ENCODE measurements at regions of chr5 and their contacts with region 1.

Region 1: GRCh38 chr5:115098041-115098702 is 71.5 kb downstream of the TRIM36 start:
- DNase-seq: no peak
- H3K4me3 ChIP-seq: no peak overlapping the region
- H3K27ac ChIP-seq: no peak overlapping the region
- H3K4me1 ChIP-seq: peaks cover 0 to 15% (median 0%) of the 10 kb centered on the region in 3 donors
- H3K27me3 ChIP-seq: no peaks in the 10 kb centered on the region
- CTCF ChIP-seq: peak; percentile 37 to 65 (median 52)
- POLR2A ChIP-seq: no peak

Region 2: DNA sequence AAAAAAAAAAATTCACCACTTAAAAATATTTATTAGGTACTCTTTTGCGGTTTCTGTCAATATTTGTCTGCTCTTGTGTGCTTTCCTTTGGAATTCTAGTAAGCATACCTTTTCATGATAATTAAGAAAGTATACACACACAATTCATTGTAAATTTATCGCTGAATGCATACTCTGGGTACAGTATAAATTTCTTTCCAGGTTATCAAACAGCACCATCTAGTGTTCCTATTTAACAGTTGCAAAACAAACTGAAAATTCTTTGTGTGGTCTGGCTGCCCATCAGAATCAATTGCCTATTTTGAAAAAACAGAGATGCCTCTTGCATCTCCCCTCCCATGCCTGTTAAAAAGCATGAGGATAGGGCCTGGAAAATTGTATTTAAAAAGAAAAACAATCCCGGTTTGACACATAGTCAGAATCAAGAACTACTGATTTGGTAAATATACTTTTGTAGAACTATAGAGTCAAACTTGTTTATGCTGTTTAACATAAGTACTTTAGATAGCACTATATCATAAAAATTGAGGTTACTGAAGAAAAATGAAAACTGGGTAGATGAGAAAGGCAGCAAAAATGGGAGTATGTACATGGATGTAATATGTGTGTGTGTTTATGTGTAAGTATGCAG is 148.3 kb after region 1 on chr5:
- intact Hi-C with region 1: loop called (anchors 10 kb)
- DNase-seq: no peak
- H3K4me3 ChIP-seq: no peak overlapping the region
- H3K27ac ChIP-seq: no peak overlapping the region
- H3K4me1 ChIP-seq: peaks cover 0 to 22% (median 0%) of the 10 kb centered on the region in 3 donors
- H3K27me3 ChIP-seq: no peaks in the 10 kb centered on the region
- CTCF ChIP-seq: peak; percentile 46 to 75 (median 58)
- POLR2A ChIP-seq: no peak

Measured in esophagus squamous epithelium (tissue), 5 donors.